ENCODE measurements at regions of chr1 and their contacts with region 1.

Region 1: DNA sequence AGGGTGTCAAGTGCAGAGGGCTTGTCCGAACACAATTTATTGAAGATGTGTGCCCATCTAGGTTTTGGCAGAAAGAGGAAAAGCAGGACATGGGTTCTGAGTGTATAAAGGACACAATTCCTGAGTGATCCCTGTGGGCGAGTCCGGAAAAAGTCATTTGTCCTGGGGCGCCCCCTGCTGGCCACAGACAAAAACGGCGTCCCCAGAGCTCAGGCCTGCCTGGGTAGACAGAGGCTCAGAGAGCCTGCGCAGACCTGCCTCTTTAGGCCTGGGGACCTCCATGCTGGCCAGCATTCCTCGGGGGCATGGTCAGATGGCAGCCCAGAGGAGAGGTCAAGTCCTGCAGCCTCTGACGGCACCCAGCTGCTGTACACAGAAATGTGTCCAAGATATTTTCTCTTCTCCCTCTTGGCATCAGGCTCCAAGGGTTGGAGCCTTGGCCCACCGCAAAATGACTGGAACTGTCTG is 65.5 kb upstream of the LRP8 start:
- DNase-seq: peak; percentile 82
- H3K27ac ChIP-seq: no peak overlapping the region
- CTCF ChIP-seq: peak; percentile 91

Region 2: GRCh38 chr1:53266106-53266505 is 127.3 kb before region 1 on chr1:
- CTCF ChIA-PET with region 1: interaction called, 25 read pairs
- POLR2A ChIA-PET with region 1: no interaction called
- DNase-seq: peak; percentile 44
- H3K27ac ChIP-seq: no peak overlapping the region
- CTCF ChIP-seq: no peak

Region 3: GRCh38 chr1:53278201-53278725 is 115.1 kb before region 1 on chr1:
- CTCF ChIA-PET with region 1: interaction called, 40 read pairs
- POLR2A ChIA-PET with region 1: no interaction called
- DNase-seq: peak; percentile 70
- H3K27ac ChIP-seq: no peak overlapping the region
- CTCF ChIP-seq: peak; percentile 87

Measured in RWPE1 (cell line).